ENCODE measurements at regions of chr11 and their contacts with region 1.

Region 1: GRCh38 chr11:20387241-20388095 is at the start of gene PRMT3:
- DNase-seq: peak; percentile 94
- H3K4me3 ChIP-seq: peak within 1 kb of the TSS; percentile 80 to 92
- H3K27ac ChIP-seq: peak within 1 kb of the TSS; percentile 90 to 93
- H3K4me1 ChIP-seq: no peaks in the 10 kb centered on the region
- H3K27me3 ChIP-seq: no peaks in the 10 kb centered on the region
- CTCF ChIP-seq: peak; percentile 94 to 99 (median 98)
- POLR2A ChIP-seq: peak; percentile 71
- total RNA-seq, gene PRMT3: 13.8 to 18.7 TPM

Region 2: GRCh38 chr11:19814421-19814820 is 573.0 kb before region 1 on chr11:
- intact Hi-C with region 1: no loop called
- DNase-seq: no peak
- H3K4me3 ChIP-seq: no peak overlapping the region
- H3K27ac ChIP-seq: no peak overlapping the region
- H3K4me1 ChIP-seq: no peaks in the 10 kb centered on the region
- H3K27me3 ChIP-seq: no peaks in the 10 kb centered on the region
- CTCF ChIP-seq: no peak
- POLR2A ChIP-seq: no peak

Region 3: GRCh38 chr11:20609727-20610707 is 222.5 kb after region 1 on chr11:
- intact Hi-C with region 1: loop called (anchors 5 kb)
- DNase-seq: peak; percentile 37
- H3K4me3 ChIP-seq: no peak overlapping the region
- H3K27ac ChIP-seq: no peak overlapping the region
- H3K4me1 ChIP-seq: no peaks in the 10 kb centered on the region
- H3K27me3 ChIP-seq: peaks cover 19% of the 10 kb centered on the region
- CTCF ChIP-seq: peak; percentile 55 to 89 (median 73)
- POLR2A ChIP-seq: no peak